ENCODE measurements at regions of chr2 and their contacts with region 1.

Region 1: DNA sequence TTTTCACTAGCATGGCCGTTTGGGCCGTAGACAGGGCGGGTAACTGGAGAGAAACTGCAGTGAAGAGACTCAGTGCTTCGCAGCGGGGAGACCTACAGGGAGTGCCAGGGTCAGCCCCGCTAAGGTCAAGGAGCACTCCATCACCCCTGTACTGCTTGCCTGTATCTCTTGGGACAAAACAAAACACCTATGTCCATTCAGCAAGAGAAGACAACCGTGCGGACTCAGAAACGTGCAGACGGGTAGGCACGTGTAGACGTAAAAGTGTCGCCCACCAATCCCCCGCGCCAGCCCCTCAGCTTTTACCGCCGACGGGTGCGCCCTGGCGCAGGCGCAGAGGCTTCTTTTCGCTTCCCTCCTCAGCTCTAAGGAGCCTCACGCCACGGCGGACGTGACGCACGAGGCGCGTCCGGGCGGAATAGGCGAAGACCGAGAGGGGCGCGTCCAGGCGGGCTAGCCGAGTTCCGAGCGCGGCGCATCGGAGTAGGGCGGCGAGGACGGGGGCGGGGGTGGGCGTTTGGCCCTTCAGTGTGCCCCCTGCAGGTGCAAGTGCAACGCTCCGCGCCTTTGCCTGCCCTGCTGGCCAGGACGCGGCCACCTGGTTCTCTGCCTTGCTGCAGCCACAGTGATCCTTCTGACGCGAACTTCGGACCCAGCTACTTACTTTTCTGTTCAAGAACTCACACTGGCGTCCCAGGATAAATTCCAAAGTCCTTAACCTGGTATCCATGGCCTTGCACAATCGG is 3.3 kb upstream of the SOS1 start:
- DNase-seq: peak; percentile 96
- H3K4me3 Mint-ChIP-seq: peak overlapping the region; percentile 88
- H3K27ac Mint-ChIP-seq: peak overlapping the region; percentile 97
- H3K4me1 Mint-ChIP-seq: peaks cover 39% of the 10 kb centered on the region
- H3K27me3 Mint-ChIP-seq: no peaks in the 10 kb centered on the region

Region 2: GRCh38 chr2:37376421-37377186 is 1747.6 kb before region 1 on chr2:
- CTCF ChIA-PET with region 1: no interaction called
- intact Hi-C with region 1: loop called (anchors 2 kb)
- DNase-seq: peak; percentile 67
- H3K4me3 Mint-ChIP-seq: no peak overlapping the region
- H3K27ac Mint-ChIP-seq: no peak overlapping the region
- H3K4me1 Mint-ChIP-seq: peaks cover 34% of the 10 kb centered on the region
- H3K27me3 Mint-ChIP-seq: peaks cover 45% of the 10 kb centered on the region

Region 3: GRCh38 chr2:38602732-38603401 is 521.3 kb before region 1 on chr2 and contains the start of gene HNRNPLL:
- CTCF ChIA-PET with region 1: no interaction called
- intact Hi-C with region 1: loop called (anchors 5 kb)
- DNase-seq: peak; percentile 98
- H3K4me3 Mint-ChIP-seq: peak within 1 kb of the TSS; percentile 90
- H3K27ac Mint-ChIP-seq: peak within 1 kb of the TSS; percentile 92
- H3K4me1 Mint-ChIP-seq: peaks cover 52% of the 10 kb centered on the region
- H3K27me3 Mint-ChIP-seq: no peaks in the 10 kb centered on the region
- total RNA-seq, gene HNRNPLL: 54.4 to 57.3 TPM

Region 4: GRCh38 chr2:38778687-38779082 is 345.5 kb before region 1 on chr2:
- CTCF ChIA-PET with region 1: no interaction called
- intact Hi-C with region 1: loop called (anchors 1 kb)
- DNase-seq: no peak
- H3K4me3 Mint-ChIP-seq: peak overlapping the region; percentile 95
- H3K27ac Mint-ChIP-seq: peak overlapping the region; percentile 89
- H3K4me1 Mint-ChIP-seq: peaks cover 11% of the 10 kb centered on the region
- H3K27me3 Mint-ChIP-seq: peaks cover 10% of the 10 kb centered on the region

Region 5: GRCh38 chr2:38892819-38893218 is 231.4 kb before region 1 on chr2:
- CTCF ChIA-PET with region 1: no interaction called
- intact Hi-C with region 1: no loop called
- DNase-seq: no peak
- H3K4me3 Mint-ChIP-seq: no peak overlapping the region
- H3K27ac Mint-ChIP-seq: no peak overlapping the region
- H3K4me1 Mint-ChIP-seq: peaks cover 2% of the 10 kb centered on the region
- H3K27me3 Mint-ChIP-seq: peaks cover 3% of the 10 kb centered on the region

Region 6: GRCh38 chr2:39069136-39069515 is 55.0 kb before region 1 on chr2:
- CTCF ChIA-PET with region 1: interaction called, 4 read pairs
- intact Hi-C with region 1: loop called (anchors 2 kb)
- DNase-seq: peak; percentile 22
- H3K4me3 Mint-ChIP-seq: no peak overlapping the region
- H3K27ac Mint-ChIP-seq: no peak overlapping the region
- H3K4me1 Mint-ChIP-seq: peaks cover 15% of the 10 kb centered on the region
- H3K27me3 Mint-ChIP-seq: no peaks in the 10 kb centered on the region

Region 7: DNA sequence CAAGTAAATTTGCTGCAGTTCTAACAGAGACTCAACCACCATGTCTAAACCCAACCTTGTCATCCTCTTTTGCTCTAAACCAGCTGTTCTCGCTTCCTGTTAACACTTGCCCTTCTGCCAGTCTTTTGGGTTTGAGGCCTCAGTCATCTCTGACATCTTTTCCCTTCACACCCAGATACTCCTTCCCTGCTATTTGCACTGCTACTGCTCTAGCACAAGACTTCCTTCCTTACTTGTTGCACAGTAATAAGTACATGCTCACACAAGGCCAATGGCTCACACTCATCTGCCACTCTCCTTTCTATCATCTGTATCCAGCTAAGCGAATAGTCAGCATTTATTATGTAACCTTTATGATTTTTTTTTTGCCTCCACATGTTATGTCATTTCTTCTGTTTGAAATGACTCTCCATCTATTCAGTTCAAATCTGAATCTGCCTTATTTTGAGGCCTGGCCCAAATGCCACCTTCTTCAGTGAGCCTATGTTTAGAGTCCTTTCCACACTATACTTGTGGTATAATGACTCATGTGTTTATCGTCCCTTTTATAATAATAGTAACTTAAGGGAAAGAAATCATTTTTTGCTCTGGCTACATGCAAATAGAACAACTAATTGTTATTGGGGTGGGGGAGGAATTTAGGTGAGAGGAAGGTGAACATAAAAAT is 142.1 kb after region 1 on chr2:
- CTCF ChIA-PET with region 1: no interaction called
- intact Hi-C with region 1: loop called (anchors 1 kb)
- DNase-seq: peak; percentile 39
- H3K4me3 Mint-ChIP-seq: no peak overlapping the region
- H3K27ac Mint-ChIP-seq: peak overlapping the region; percentile 13
- H3K4me1 Mint-ChIP-seq: peaks cover 21% of the 10 kb centered on the region
- H3K27me3 Mint-ChIP-seq: no peaks in the 10 kb centered on the region

Region 8: GRCh38 chr2:39778962-39779851 is 655.0 kb after region 1 on chr2 and contains the start of gene THUMPD2:
- CTCF ChIA-PET with region 1: no interaction called
- intact Hi-C with region 1: loop called (anchors 5 kb)
- DNase-seq: peak; percentile 68
- H3K4me3 Mint-ChIP-seq: peak within 1 kb of the TSS; percentile 77
- H3K27ac Mint-ChIP-seq: peak within 1 kb of the TSS; percentile 85
- H3K4me1 Mint-ChIP-seq: peaks cover 54% of the 10 kb centered on the region
- H3K27me3 Mint-ChIP-seq: no peaks in the 10 kb centered on the region
- total RNA-seq, gene THUMPD2: 13.6 to 13.8 TPM

Measured in activated naive CD4-positive, alpha-beta T cell treated with anti-CD3 and anti-CD28 coated beads for 36 hours (primary cell).